Vagina (tissue), 2 donors: ENCODE measurements at regions of chr17 and their contacts with region 1.

Region 1: GRCh38 chr17:77372444-77373298 is 231.9 kb downstream of the SEC14L1 start:
- DNase-seq: no peak
- H3K4me3 ChIP-seq: peak overlapping the region; percentile 76 to 78
- H3K27ac ChIP-seq: peak overlapping the region; percentile 95
- H3K4me1 ChIP-seq: peaks cover 75% of the 10 kb centered on the region
- H3K27me3 ChIP-seq: no peaks in the 10 kb centered on the region
- CTCF ChIP-seq: no peak
- POLR2A ChIP-seq: peak in 1 of 2 donors; percentile 24

Region 2: GRCh38 chr17:77096570-77097214 is 276.0 kb before region 1 on chr17:
- intact Hi-C with region 1: loop called (anchors 10 kb)
- DNase-seq: no peak
- H3K4me3 ChIP-seq: no peak overlapping the region
- H3K27ac ChIP-seq: peak overlapping the region; percentile 88
- H3K4me1 ChIP-seq: peaks cover 45% of the 10 kb centered on the region
- H3K27me3 ChIP-seq: no peaks in the 10 kb centered on the region
- CTCF ChIP-seq: peak in 2 of 3 experiments; percentile 39 to 86
- POLR2A ChIP-seq: no peak

Region 3: GRCh38 chr17:77325577-77326075 is 47.0 kb before region 1 on chr17:
- intact Hi-C with region 1: loop called (anchors 5 kb)
- DNase-seq: peak; percentile 61 to 91
- H3K4me3 ChIP-seq: no peak overlapping the region
- H3K27ac ChIP-seq: peak overlapping the region; percentile 97
- H3K4me1 ChIP-seq: peaks cover 67% of the 10 kb centered on the region
- H3K27me3 ChIP-seq: no peaks in the 10 kb centered on the region
- CTCF ChIP-seq: no peak
- POLR2A ChIP-seq: no peak

Region 4: GRCh38 chr17:77420804-77421629 is 48.3 kb after region 1 on chr17:
- intact Hi-C with region 1: loop called (anchors 5 kb)
- DNase-seq: no peak
- H3K4me3 ChIP-seq: peak overlapping the region in 1 of 2 donors; percentile 15
- H3K27ac ChIP-seq: peak overlapping the region; percentile 98
- H3K4me1 ChIP-seq: peaks cover 81% of the 10 kb centered on the region
- H3K27me3 ChIP-seq: no peaks in the 10 kb centered on the region
- CTCF ChIP-seq: no peak
- POLR2A ChIP-seq: no peak

Region 5: GRCh38 chr17:77476931-77477877 is 104.5 kb after region 1 on chr17:
- intact Hi-C with region 1: loop called (anchors 10 kb)
- DNase-seq: peak in 1 of 2 donors; percentile 96
- H3K4me3 ChIP-seq: peak overlapping the region in 1 of 2 donors; percentile 21
- H3K27ac ChIP-seq: peak overlapping the region; percentile 90
- H3K4me1 ChIP-seq: peaks cover 100% of the 10 kb centered on the region
- H3K27me3 ChIP-seq: no peaks in the 10 kb centered on the region
- CTCF ChIP-seq: peak in 1 of 3 experiments; percentile 24
- POLR2A ChIP-seq: no peak